GM13977 (cell line): ENCODE measurements at regions of chr12 and their contacts with region 1.

Region 1: DNA sequence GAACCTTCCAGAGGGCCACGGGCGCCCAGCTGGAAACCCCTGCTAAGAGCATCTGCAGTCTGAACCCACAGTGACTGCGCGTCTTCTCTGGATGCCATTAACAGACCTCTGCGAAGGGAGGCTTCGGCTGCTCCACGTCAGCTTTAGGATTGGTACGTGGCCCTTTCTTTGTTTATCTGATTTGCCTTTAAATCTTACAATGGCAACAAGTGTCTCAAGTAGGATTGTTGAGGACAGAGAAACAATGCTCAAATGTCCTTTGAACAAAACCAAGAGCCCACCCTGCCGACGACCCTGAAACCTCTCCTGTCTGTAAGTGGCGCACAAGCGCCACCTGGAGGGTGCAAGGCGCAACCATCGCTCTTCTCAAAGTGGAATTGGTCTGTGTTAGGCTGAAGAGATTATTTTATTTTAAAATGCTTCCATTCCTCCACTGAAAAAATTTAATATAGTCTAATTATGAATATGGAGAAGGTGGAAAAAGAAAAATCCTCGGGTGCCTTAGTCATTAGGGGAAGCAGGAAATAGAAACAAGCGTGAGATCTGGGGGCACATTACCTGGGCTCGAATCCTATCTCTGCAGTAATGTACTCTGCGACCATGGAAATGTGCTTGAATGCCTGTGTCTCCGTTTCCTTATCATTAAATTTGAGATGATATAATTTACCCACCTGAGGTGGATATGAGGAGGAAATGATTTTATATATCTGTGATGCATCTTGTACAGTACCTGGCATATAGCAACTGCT is 82.6 kb upstream of the PTPRB start:
- DNase-seq: peak; percentile 21
- CTCF ChIP-seq: peak; percentile 89

Region 2: DNA sequence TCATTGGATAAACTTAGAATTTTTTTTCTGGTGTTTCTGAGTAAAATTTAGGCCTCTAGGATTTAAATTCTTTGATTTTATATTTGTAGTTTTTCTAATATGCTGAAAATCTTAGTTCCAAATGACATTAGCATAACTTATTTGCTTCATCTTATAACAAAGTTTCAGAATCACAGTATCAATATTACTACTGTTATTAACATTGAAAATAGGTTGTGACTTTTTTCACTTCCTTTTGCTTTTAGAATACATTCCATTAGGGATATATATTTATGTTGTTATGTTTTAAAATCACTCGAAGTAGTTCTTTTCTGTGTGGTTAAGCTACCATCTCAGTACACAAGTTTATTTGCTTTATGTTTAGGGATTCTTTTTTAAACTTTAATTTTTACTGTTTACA is 968.4 kb before region 1 on chr12:
- in situ Hi-C with region 1: no loop called
- DNase-seq: no peak
- CTCF ChIP-seq: no peak

Region 3: DNA sequence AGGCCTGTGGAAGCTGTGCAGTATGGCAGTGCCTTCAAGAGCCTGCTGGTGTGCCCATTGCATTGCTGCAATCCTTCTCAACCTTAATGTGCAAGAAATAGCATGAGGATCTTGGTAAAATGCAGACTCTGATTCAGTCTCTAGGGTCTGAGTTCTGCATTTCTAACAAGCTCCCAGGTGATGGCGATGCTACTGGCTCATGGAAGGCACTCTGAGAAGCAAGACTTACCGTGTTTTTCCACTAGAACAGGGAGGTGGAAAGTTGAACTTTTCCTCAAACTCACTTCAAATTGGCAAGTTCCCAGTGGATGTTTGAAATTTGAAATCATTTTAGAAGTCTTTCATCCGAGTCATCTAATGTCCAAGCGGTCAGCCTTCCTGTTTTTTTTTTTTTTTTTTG is 839.3 kb before region 1 on chr12:
- in situ Hi-C with region 1: loop called (anchors 10 kb)
- DNase-seq: no peak
- CTCF ChIP-seq: no peak